Heart right ventricle (tissue), 16 donors: ENCODE measurements at regions of chr6 and their contacts with region 1.

Region 1: DNA sequence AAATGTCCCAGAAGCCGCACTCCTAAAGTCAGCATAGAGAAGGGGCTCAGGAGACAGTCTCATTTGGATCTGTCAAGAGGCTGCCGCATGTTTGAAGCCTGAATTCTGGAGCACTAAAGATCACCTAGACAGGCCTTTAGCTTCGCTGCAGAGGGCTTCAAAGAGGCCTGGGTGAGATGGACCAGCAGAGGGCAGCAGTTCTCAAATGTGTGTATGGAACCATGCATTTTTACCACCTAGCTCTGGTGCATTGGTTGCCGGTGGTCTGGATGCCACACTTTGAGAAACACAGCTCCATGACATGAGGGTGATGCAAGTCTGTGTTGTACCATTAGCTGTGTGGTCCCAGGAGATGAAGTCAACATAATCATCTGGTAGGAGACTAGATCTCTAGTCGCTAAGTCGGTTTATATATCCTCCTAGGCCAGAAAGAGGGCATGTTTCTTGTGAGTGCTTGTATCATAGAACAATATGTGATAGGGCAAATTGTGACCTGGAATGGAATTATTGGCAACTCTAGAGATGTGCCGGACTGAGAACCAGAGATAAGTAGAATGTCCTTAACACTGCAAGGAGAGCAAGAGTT is 64.8 kb downstream of the KIAA0319 start:
- DNase-seq: peak; percentile 64 to 75
- ATAC-seq: peak; percentile 67 to 85 (median 78)
- H3K4me3 ChIP-seq: no peak overlapping the region
- H3K27ac ChIP-seq: no peak overlapping the region
- H3K4me1 ChIP-seq: peaks cover 0 to 14% (median 8%) of the 10 kb centered on the region in 9 donors
- H3K27me3 ChIP-seq: no peaks in the 10 kb centered on the region
- CTCF ChIP-seq: peak; percentile 63 to 88 (median 81)

Region 2: DNA sequence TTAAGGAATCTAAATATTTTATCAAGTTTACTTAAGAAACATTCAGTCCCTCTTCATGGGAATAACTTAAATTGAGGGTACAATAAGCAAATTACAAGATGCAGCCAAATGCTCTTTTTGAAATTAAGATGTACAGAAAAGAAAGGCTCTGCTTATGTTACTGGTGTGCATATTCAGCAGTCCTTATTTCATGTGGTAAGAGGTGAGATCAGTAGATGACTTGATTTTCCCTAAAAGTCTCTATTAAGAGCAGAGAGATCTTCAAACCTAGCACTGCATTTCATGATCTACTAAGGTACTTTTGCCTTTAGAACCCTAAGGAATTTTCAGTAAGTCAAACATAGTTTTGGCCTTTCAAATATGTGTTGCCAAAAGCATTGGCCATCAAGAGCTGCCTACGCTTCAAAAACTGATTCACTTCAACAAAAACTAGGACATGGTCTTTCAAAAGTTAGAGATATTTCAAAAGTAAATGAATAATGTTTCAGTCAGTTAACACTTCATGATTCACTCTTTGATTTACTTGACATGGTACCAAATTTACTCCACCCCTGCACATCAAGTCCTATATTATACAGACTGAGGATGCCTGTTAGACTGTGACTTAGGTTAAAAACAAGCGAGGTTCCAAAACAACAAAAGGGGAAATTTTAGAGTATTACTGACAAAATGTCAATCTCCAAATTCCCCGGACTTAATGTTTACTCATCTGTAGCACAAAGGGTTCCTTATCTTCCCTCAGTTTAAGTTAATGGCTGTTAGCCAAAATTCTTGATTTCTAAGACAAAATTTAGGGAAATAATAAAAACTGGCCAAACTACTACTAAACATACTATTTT is 118.6 kb after region 1 on chr6:
- intact Hi-C with region 1: loop called in 8 of 10 experiments (anchors 1 to 5 kb)
- DNase-seq: no peak
- ATAC-seq: peak in 1 of 8 donors; percentile 30
- H3K4me3 ChIP-seq: no peak overlapping the region
- H3K27ac ChIP-seq: peak overlapping the region in 3 of 10 donors; percentile 11 to 24 (median 12)
- H3K4me1 ChIP-seq: peaks cover 0 to 18% (median 4%) of the 10 kb centered on the region in 9 donors
- H3K27me3 ChIP-seq: no peaks in the 10 kb centered on the region
- CTCF ChIP-seq: no peak

Region 3: DNA sequence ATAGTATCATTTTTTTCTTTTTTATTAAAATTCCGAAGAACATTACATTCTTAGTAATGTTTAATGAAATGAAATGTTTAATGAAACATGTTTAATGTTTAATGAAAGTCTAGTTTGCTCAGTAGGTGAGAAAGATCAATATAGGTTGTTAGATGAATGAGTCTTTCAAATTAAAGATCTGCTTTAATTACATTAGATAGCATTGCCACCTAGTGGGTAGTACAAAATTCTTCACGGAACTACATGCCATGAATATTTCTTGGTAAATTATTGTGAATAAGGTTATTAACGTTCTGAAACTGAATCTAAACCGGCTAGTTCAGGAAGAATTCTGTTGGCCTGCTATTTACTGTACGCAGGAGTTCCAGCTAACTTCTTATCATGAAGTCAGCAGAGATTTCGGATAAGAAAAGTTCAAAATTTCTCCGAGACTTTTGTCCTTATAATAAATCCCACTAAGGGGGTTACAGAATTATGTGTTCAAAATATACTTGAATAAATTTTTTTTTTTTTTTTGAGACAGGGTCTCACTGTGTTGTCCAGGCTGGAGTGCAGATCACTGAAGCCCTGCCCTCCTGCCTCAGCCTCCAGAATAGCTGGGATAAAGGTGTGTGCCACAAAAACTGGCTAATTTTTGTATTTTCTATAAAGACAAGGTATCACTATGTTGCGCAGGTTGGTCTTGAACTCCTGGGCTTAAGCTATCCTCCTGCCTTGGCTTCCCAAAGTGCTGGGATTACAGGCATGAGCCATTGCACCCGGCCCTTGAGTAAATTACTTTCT is 185.7 kb after region 1 on chr6:
- intact Hi-C with region 1: loop called (anchors 2 to 10 kb)
- DNase-seq: no peak
- ATAC-seq: peak in 3 of 8 donors; percentile 39 to 67 (median 52)
- H3K4me3 ChIP-seq: no peak overlapping the region
- H3K27ac ChIP-seq: no peak overlapping the region
- H3K4me1 ChIP-seq: peaks cover 0 to 3% (median 0%) of the 10 kb centered on the region in 9 donors
- H3K27me3 ChIP-seq: no peaks in the 10 kb centered on the region
- CTCF ChIP-seq: peak in 8 of 9 donors; percentile 22 to 60 (median 50)

Region 4: GRCh38 chr6:25070547-25071366 is 489.6 kb after region 1 on chr6:
- intact Hi-C with region 1: loop called in 6 of 10 experiments (anchors 2 to 10 kb)
- DNase-seq: peak; percentile 44 to 74
- ATAC-seq: peak; percentile 58 to 95 (median 84)
- H3K4me3 ChIP-seq: no peak overlapping the region
- H3K27ac ChIP-seq: peak overlapping the region in 2 of 10 donors; percentile 28 to 67
- H3K4me1 ChIP-seq: peaks cover 0 to 7% (median 0%) of the 10 kb centered on the region in 9 donors
- H3K27me3 ChIP-seq: no peaks in the 10 kb centered on the region
- CTCF ChIP-seq: peak; percentile 90 to 97 (median 93)